ENCODE measurements at regions of chr4 and their contacts with region 1.

Region 1: GRCh38 chr4:172521248-172521647 is 647.4 kb upstream of the GALNT7 start:
- DNase-seq: no peak
- ATAC-seq: no peak
- H3K4me3 ChIP-seq: no peak overlapping the region
- H3K4me3 Mint-ChIP-seq: no peak overlapping the region
- H3K27ac ChIP-seq: no peak overlapping the region
- H3K27ac Mint-ChIP-seq: no peak overlapping the region
- H3K4me1 ChIP-seq: no peaks in the 10 kb centered on the region
- H3K4me1 Mint-ChIP-seq: no peaks in the 10 kb centered on the region
- H3K27me3 ChIP-seq: no peaks in the 10 kb centered on the region
- H3K27me3 Mint-ChIP-seq: no peaks in the 10 kb centered on the region
- CTCF ChIP-seq: no peak

Region 2: DNA sequence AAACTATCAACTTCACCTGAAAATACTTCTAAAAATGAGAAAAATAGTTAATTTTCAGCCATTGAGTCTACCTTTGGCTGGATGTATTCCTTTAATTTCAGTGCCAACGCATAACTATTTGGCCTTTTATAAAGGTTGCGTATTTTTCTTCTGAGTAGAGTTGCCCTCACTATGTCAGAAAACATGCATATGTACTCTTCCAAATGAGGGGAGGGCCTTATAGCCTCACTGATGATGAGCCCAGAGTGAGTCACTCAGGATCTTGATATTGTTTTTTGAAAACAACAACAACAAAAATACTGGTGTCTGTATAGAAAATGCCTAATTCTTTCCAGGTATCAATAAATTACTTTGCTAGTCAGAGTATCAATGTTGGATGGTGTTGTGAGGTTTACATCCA is 1413.0 kb after region 1 on chr4:
- CTCF ChIA-PET with region 1: no interaction called
- POLR2A ChIA-PET with region 1: no interaction called
- intact Hi-C with region 1: loop called in 1 of 2 experiments (anchors 5 kb)
- DNase-seq: no peak
- ATAC-seq: no peak
- H3K4me3 ChIP-seq: no peak overlapping the region
- H3K4me3 Mint-ChIP-seq: no peak overlapping the region
- H3K27ac ChIP-seq: no peak overlapping the region
- H3K27ac Mint-ChIP-seq: no peak overlapping the region
- H3K4me1 ChIP-seq: no peaks in the 10 kb centered on the region
- H3K4me1 Mint-ChIP-seq: no peaks in the 10 kb centered on the region
- H3K27me3 ChIP-seq: no peaks in the 10 kb centered on the region
- H3K27me3 Mint-ChIP-seq: no peaks in the 10 kb centered on the region
- CTCF ChIP-seq: no peak